ENCODE measurements at regions of chr5 and their contacts with region 1.

Region 1: DNA sequence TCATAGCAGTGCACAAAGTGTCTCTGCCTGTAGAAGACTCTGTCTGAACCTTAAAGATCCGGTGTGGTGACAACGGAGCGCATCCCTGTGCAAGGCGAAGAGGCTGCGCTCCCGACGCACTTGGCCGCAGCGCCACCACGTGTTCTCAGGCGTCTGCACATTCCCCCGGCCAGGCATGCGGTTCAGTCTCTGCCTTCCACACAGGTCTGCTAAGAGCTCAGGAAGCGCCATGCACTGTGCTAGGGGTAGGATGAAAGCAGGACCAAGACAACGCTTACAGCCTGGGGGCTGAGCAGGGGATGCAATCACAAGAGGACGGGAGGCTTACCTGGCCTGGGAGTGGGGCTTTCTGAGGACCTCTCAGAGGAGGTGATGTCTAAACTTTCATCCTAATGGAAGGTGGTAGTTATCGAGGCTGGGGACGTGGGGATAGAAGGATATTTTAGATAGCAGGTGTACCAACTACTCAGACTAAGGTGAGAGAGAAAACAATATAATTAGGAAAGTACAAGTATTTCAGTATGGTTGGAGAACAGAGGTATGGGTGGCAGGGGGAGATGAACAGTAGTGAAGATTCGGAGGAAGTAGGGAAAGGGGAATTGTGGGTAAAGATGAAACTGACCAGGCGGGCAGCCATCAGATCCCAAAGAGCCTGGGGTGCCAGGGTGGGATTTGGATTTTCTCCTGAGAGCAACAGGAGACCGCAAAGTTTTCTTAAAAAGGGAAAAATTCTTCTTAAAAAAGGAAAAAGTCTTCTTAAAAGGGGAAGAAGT is 13.3 kb downstream of the CAPSL start:
- DNase-seq: peak; percentile 63 to 97 (median 77)

Region 2: GRCh38 chr5:35089334-35090314 is 835.5 kb before region 1 on chr5:
- intact Hi-C with region 1: loop called (anchors 1 kb)
- DNase-seq: peak in 6 of 10 donors; percentile 17 to 90 (median 58)

Region 3: GRCh38 chr5:35617435-35618303 is 307.5 kb before region 1 on chr5 and contains the start of gene SPEF2:
- intact Hi-C with region 1: loop called (anchors 2 kb)
- DNase-seq: peak; percentile 70 to 97 (median 82)

Region 4: DNA sequence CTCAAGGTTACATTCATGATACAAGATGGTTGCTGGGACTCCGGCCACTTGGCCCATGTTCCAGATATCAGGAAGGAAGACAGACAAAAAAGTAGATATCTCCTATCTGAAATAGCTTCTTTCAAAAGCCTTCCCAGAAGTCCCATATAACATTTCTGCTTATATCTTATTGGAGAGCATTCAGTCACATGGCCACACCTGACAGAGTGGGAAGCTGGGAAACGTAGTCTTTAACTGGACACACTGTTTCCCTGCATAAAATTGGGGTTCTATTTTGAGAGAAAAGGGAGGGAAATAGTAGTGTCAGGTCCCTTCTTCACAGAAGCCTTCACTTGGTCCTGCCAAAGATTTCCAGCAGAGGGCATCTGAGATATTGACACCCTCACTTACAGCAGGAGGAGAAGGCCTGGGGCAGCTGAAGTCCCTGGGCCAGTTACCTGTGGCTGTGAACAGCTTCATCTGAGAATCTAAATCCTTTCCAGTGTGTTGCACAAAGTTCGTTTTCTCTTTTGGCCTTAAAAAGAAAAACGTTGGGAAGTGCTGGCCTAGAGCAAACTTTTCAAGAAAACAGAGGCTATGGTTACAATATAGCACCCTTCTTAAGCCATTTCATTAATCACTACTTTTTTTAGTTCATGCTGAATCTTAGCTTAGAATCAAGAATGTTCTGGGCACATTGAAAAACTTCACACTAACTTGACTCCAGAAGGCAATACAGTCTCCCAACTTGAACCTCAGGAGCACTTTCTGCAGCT is 274.0 kb before region 1 on chr5:
- intact Hi-C with region 1: loop called (anchors 2 kb)
- DNase-seq: peak in 5 of 10 donors; percentile 8 to 66 (median 16)

Region 5: DNA sequence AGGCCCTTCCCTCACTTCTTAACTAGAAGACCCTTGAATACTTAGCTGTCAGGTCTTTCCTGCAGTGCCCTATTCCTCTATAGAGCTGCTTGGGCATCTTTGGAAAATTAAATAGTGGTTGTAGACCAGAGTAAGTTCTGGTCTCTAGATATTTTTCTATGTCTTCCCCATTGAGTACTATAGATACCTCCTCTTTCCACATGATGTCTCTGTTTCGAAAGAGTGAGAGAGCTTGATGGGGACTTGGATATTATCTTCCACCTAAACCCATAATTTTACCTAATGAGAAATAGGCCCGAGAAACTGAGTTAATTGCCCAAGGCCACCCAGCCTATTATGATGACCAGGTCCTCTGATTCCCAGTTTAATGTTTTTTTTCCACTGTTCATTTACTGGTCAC is 267.3 kb before region 1 on chr5:
- intact Hi-C with region 1: loop called (anchors 2 kb)
- DNase-seq: no peak

Region 6: DNA sequence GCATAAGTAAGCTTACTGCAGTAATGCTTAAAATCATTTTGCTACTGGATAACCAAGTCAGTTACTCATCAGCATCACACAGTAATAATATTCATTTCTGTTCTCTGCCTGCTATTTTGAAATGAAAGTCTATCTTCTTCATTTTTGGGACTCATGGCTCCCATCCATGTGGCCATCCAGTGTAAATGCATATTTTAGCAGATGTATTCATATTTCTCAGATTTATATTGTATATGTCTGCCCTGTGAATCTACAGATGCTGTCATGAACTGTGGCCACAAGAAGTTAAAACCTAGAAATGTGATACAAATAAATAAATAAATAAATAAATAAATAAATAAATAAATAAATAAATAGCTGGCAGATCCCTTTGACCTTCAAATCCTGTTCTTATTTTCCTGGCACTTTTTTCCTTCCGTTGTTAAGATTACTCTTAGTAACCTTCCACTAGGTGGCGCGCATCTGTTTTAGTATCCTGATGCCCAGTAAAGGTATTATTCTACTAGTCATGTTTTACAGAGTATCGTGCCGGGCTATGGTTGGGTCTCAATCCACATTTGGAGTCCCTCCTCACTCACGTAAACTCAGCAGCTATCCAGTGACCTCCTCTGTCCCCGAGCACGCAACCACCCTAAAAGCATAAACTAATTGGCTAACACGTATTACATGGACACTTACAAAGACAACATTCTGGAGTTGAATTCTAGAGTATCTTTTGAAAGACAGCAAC is 147.6 kb before region 1 on chr5:
- intact Hi-C with region 1: loop called (anchors 2 kb)
- DNase-seq: peak in 6 of 10 donors; percentile 17 to 73 (median 48)

Region 7: GRCh38 chr5:35799753-35800152 is 125.4 kb before region 1 on chr5:
- intact Hi-C with region 1: no loop called
- DNase-seq: no peak

Measured in posterior cingulate gyrus (tissue), 11 donors.